Esophagus muscularis mucosa (tissue), 4 donors: ENCODE measurements at regions of chr9 and their contacts with region 1.

Region 1: GRCh38 chr9:34899535-34900158 is 58.4 kb upstream of the PHF24 start:
- DNase-seq: peak; percentile 91
- H3K4me3 ChIP-seq: no peak overlapping the region
- H3K27ac ChIP-seq: no peak overlapping the region
- H3K4me1 ChIP-seq: no peaks in the 10 kb centered on the region
- H3K27me3 ChIP-seq: peaks cover 0 to 26% (median 0%) of the 10 kb centered on the region in 4 donors
- CTCF ChIP-seq: peak; percentile 79 to 89 (median 86)
- EP300 ChIP-seq: no peak
- POLR2A ChIP-seq: no peak

Region 2: DNA sequence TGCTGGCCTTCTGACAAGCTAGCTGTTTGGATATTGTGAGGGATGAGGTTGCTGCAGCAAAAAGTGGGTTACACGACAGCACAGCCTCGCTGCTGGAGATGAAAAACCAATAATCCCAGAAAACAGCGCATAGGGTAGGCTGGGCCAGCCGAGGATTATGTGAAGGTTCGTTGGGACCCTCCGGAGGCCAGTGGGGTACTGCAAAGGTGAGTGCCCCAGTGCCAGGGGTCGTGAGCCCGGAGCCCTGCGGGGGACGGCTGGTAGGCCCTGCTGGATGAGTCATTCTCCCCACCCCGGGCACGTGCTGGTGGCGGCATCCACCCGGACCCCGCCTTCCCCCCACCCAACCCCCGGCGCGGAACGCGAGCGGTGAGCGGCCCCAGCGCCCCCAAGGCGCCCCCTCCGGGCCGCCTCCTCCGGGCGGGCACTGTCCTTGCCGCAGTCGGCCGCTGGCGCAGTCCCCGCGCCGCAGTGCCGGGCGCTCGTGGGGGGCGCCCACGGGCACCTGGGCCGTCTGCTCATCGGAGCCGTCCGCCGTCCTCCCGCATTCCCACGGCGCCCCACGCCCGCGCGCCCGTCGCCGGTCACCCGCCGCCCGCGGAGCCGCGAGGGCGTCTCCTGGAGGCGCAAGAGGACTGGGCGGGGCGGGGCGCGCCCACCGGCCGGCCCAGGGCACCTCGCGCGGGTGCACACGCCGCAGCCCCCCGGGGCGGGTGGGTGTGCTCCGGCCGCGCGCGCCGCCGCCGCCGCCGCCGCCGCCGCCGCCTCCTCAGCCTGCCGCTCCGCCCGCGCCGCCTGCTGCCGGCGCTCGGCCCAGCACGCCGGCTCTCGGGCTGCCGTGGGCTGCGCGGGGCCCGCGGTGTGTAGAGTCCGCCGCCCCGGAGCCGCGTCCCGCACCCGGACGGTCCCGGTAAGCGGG is 58.1 kb after region 1 on chr9 and contains the start of gene PHF24:
- intact Hi-C with region 1: no loop called
- DNase-seq: no peak
- H3K4me3 ChIP-seq: peak within 1 kb of the TSS; percentile 55 to 68 (median 58)
- H3K27ac ChIP-seq: no peak within 1 kb of the TSS
- H3K4me1 ChIP-seq: peaks cover 3 to 18% (median 12%) of the 10 kb centered on the region in 4 donors
- H3K27me3 ChIP-seq: peaks cover 0 to 51% (median 15%) of the 10 kb centered on the region in 4 donors
- CTCF ChIP-seq: peak in 1 of 3 experiments; percentile 24
- EP300 ChIP-seq: no peak
- POLR2A ChIP-seq: no peak
- total RNA-seq, gene PHF24: under 0.01 to 0.99 (median 0.76) TPM

Region 3: DNA sequence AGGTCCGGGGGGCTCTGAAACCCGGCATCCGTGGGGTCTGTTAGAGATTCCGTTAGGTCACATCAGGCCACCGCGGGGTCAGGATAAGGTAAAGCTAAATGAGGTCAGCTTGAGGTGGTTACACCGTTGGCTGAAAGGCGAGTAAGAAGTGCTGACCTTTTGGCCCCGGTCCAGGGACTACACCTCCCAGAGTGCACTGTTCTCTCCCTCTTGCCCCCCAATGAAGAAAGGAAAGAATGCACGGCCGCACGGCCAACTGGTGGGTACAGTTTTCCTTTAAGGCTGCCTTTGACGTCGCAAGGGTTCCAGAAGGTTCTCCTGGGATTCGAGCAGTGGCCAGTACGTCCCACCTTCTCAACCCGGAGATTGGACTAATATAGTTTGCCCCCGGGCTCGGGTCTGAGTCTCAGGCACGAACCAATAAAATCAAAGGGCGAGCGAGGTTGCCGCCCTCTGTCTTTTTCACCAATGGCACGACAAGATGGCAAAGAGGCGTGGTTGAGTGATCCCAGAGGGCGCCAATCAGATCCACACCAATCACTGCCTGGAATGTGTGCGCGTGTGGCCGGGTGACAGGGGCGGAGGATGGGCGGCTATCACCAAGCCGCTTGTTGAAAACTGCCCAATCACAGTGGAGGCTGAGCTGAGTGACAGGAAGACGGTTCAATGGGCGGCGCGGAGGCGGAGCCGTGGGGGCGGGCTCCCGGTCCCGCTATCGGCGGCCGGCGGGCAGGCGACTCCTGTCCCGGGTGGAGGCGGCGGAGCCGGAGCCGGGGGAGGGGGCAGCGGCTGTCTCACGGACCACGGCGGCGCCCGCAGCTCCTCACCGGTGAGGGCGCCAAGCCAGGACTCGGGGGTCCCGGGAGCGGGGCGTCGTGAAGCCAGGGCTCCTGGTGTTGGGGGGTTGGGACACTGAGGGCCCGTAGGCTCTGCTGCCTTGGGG is 89.6 kb after region 1 on chr9 and contains the start of gene DNAJB5:
- intact Hi-C with region 1: loop called (anchors 2 kb)
- DNase-seq: peak; percentile 100
- H3K4me3 ChIP-seq: peak within 1 kb of the TSS; percentile 89 to 93 (median 92)
- H3K27ac ChIP-seq: peak within 1 kb of the TSS in 2 of 4 donors; percentile 98 to 99
- H3K4me1 ChIP-seq: peaks cover 44 to 53% (median 52%) of the 10 kb centered on the region in 4 donors
- H3K27me3 ChIP-seq: no peaks in the 10 kb centered on the region
- CTCF ChIP-seq: peak in 1 of 3 experiments; percentile 13
- EP300 ChIP-seq: peak; percentile 27
- POLR2A ChIP-seq: peak; percentile 97
- total RNA-seq, gene DNAJB5: 83.5 to 124 (median 93.8) TPM

Region 4: DNA sequence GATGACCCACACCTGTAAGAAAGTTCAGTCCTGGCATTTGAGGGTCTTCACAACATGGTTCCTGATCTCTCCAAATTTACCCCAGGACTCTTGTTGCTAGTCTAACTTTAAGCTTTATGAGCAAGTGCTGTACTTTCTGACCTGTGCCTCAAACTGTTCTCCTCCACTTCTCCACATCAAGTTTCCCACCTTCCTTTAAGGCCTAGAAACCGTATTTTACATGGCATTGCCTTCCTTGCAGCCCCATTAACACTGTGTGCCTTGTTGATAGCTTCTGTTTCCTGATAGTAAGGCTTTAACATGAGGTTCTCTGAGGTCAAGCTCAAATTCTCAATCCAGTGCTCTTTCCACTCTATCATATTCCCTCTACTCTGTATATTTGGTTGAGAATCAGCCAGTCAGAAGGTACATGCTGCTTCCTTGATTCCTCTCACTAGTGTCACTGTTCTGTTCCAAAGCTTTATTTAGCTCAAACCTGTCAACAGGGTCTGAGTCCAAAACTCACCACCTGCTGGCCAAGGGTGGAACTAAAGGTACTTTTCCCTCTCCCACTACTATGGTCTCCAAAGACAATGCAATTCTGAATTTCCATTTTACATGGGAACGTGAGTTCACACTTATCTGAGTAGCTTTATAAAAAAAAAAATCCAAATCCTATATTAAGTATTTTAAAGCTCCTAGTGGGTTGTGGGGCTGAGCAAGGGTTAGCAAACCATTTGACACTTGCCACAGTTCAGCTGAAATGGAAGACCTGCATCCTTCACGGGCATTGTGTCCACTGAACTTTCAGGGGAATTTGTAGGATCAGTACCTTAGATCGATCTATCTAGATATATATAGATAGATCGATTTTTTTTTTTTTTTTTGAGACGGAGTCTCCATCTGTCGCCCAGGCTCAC is 151.7 kb after region 1 on chr9:
- intact Hi-C with region 1: loop called (anchors 2 kb)
- DNase-seq: no peak
- H3K4me3 ChIP-seq: no peak overlapping the region
- H3K27ac ChIP-seq: peak overlapping the region; percentile 63 to 78 (median 71)
- H3K4me1 ChIP-seq: peaks cover 6 to 9% (median 8%) of the 10 kb centered on the region in 4 donors
- H3K27me3 ChIP-seq: no peaks in the 10 kb centered on the region
- CTCF ChIP-seq: peak; percentile 63 to 78 (median 73)
- EP300 ChIP-seq: no peak
- POLR2A ChIP-seq: no peak

Region 5: GRCh38 chr9:35096035-35096849 is 196.6 kb after region 1 on chr9 and contains the start of gene PIGO:
- intact Hi-C with region 1: loop called (anchors 2 kb)
- DNase-seq: peak; percentile 97
- H3K4me3 ChIP-seq: peak within 1 kb of the TSS; percentile 72 to 99 (median 82)
- H3K27ac ChIP-seq: peak within 1 kb of the TSS; percentile 92 to 98 (median 95)
- H3K4me1 ChIP-seq: peaks cover 11 to 25% (median 20%) of the 10 kb centered on the region in 4 donors
- H3K27me3 ChIP-seq: no peaks in the 10 kb centered on the region
- CTCF ChIP-seq: peak; percentile 59 to 72 (median 72)
- EP300 ChIP-seq: no peak
- POLR2A ChIP-seq: peak; percentile 34
- total RNA-seq, gene PIGO: 9.1 to 12.5 (median 10.1) TPM

Region 6: GRCh38 chr9:35470894-35471293 is 571.2 kb after region 1 on chr9:
- intact Hi-C with region 1: loop called (anchors 10 kb)
- DNase-seq: no peak
- H3K4me3 ChIP-seq: no peak overlapping the region
- H3K27ac ChIP-seq: no peak overlapping the region
- H3K4me1 ChIP-seq: no peaks in the 10 kb centered on the region
- H3K27me3 ChIP-seq: no peaks in the 10 kb centered on the region
- CTCF ChIP-seq: no peak
- EP300 ChIP-seq: no peak
- POLR2A ChIP-seq: no peak